Cardiac septum (tissue), 1 donor: ENCODE measurements at regions of chr5 and their contacts with region 1.

Region 1: GRCh38 chr5:32027717-32028321 is 146.3 kb downstream of the GOLPH3 start:
- DNase-seq: peak; percentile 80

Region 2: GRCh38 chr5:31707329-31707728 is 320.5 kb before region 1 on chr5:
- intact Hi-C with region 1: no loop called
- DNase-seq: no peak

Region 3: DNA sequence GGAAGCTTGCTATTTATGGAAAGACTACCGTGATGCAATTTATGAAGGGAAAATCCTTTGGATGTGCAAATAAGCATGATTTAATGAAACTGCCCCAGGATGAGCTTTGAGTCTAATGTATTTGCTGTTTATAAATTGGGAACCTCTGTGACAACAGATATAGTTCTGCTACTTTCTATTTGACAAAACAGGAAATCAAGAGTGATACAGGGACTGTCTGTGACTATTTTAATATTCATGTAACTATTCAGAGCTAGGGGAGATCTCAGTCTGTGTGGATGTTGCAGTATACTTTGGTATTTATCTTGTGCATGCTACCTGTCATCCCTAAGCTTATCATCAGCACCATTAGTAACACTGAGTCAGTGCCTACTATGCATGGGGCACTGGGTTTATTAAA is 256.8 kb before region 1 on chr5:
- intact Hi-C with region 1: loop called (anchors 1 kb)
- DNase-seq: no peak

Region 4: DNA sequence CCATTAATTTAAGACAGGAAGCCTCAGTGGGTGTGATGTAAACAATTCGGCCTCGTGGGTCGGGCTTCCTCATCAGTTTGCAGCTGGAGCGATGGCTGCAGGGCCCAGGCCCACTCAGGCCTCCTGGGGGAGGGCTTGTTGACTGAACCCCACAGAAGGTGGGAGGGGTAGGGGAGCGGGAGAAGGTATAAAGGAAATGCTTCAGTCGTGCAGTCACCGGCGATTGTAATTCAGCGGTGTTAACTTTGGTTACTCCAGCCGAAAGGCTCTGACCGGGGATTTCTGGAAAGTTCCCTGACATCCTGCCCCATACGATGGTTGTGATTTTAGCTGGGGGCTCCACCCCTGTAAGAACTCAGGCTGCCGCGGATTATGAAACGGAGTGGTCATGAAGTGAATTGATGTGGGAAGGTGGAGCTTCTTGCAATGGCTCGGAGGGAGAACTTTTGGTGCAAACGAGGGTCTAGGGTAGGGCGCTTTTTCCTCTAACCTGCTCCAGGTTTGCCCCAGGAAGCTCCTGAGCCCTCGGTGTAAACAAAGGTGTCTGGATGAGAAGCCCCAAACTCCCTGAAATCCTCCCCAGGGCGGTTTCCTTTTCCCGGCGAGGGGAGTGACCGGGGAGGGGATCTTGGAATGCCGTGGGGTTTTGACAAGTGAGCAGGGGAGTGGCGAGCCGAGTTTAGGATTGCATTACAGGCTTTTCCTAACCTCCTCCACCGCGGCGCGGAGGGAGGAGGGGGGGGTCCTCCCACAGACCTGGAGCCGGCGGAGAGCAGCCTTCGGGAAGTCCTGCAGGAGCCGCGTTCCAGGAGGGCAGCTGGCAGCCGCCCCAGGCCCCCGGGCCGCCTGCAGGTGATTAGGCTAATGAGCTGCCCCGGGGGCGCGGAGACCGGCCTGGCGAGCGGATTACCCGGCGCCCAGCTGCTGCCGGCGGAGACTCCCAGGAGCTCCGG is 173.4 kb before region 1 on chr5:
- intact Hi-C with region 1: loop called (anchors 2 kb)
- DNase-seq: peak; percentile 80

Region 5: DNA sequence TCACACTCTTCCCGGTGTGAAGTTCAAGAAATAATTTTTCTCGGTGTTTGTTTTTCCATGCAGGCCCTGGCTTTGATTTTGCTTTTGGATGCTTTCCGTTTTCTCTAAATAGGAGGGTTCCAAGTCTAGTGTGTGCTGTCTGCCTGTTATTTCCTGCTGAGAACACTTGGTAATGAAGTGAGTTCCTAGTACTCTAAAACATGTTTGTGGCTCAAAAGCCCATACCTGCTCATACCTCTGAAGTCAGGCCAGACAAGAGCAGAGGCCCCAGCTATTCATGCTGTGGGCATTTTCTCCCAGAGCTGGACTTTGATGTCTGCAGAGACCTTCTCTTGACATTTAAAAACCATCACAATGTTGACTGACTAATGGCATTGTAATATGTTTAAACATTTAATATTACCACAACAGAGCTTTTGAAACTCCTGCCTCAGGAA is 64.9 kb before region 1 on chr5:
- intact Hi-C with region 1: loop called (anchors 5 kb)
- DNase-seq: no peak